ENCODE measurements at regions of chr5 and their contacts with region 1.

Region 1: DNA sequence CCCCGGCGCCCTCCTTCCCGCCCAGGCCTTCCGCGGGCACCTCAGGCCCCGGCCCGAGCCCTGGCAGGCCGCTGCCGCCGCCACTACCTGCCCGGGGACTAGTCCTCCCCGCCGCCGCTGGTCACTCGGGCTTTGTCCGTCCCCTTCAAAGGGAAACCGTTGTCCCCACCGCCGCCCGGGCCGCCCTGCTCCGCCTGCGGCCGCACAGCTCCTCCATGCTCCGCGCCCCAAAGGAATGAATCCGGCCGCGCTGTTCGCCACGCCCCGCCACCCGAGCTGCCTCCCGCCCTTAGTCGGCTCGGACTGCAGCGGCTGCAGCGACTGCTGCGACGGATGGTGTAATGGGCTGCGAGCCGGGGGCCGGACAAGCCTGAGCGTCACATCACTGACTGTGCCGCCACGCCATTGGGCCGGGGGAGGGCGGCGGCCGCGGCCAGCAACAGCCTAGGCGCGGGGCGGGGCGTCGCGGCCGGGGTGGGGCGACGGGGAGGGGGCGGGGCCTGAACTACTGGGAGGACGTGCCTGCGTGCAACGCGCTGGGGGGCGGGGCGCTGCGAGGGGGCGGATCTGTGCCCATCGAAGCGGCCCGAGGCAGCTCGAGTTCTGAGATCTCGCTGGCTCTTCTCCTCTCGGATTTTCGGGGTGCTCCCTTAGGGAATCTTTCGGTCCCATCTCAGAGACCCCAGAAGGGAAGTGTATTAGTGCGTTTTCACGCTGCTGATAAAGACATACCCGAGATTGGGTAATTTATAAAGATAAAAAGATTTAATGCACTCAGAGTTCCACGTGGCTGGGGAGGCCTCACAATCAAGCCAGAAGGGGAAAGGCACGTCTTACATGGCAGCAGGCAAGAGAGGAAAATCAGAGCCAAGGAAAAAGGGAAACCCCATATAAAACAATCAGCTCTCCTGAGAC is at the start of gene FEM1C:
- DNase-seq: peak; percentile 93 to 100 (median 96)
- ATAC-seq: peak; percentile 86
- H3K4me3 ChIP-seq: peak within 1 kb of the TSS; percentile 76
- H3K4me3 Mint-ChIP-seq: peak within 1 kb of the TSS; percentile 98
- H3K27ac ChIP-seq: peak within 1 kb of the TSS; percentile 78 to 95
- H3K27ac Mint-ChIP-seq: peak within 1 kb of the TSS; percentile 98
- H3K4me1 ChIP-seq: peaks cover 14% of the 10 kb centered on the region
- H3K4me1 Mint-ChIP-seq: peaks cover 59% of the 10 kb centered on the region
- H3K27me3 ChIP-seq: no peaks in the 10 kb centered on the region
- H3K27me3 Mint-ChIP-seq: no peaks in the 10 kb centered on the region
- CTCF ChIP-seq: no peak
- total RNA-seq, gene FEM1C: 43.3 to 44.2 TPM

Region 2: DNA sequence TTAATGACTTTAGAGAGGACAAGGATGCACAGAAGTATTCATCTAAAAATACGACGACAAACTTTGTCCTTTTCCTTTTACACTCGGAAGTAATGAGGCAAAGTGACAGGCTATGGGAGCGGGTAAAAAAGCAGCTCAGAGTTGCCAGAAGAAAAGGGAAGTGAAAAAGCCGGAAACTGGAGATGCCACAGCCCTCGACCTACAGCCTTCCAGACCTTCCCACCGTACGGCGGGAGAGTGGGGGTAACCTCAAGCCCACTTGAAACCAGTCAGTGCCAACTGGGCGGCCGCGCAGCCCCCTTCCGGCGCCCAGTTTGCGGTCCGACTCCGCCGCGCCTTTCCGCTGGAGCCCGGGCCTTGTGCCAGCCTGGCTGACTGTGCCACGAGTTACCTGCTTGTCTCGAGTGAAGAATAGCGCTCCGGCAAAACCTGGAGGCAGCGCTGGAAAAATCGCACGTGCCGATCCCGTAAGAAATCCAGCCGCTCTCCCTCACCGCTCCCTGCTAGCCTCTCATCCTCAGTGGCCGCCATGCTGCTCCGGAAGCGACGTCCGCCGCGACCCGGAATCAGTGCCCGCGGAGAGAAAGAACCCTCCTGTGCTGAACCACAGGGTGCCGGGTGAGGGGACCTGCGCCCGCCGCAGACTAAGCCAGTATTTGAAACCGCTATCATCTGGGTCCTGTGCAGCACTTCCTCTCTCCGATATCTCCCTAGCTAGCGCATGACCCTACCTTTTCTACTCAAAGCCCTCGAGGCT is 282.2 kb before region 1 on chr5 and contains the start of gene PGGT1B:
- CTCF ChIA-PET with region 1: no interaction called
- POLR2A ChIA-PET with region 1: interaction called, 10 read pairs
- intact Hi-C with region 1: no loop called
- DNase-seq: peak; percentile 48 to 82 (median 64)
- ATAC-seq: peak; percentile 93
- H3K4me3 ChIP-seq: peak within 1 kb of the TSS; percentile 76
- H3K4me3 Mint-ChIP-seq: peak within 1 kb of the TSS; percentile 96
- H3K27ac ChIP-seq: peak within 1 kb of the TSS; percentile 52 to 72
- H3K27ac Mint-ChIP-seq: peak within 1 kb of the TSS; percentile 77
- H3K4me1 ChIP-seq: peaks cover 14% of the 10 kb centered on the region
- H3K4me1 Mint-ChIP-seq: peaks cover 53% of the 10 kb centered on the region
- H3K27me3 ChIP-seq: no peaks in the 10 kb centered on the region
- H3K27me3 Mint-ChIP-seq: no peaks in the 10 kb centered on the region
- CTCF ChIP-seq: no peak
- total RNA-seq, gene PGGT1B: 37.5 to 39.3 TPM

Region 3: DNA sequence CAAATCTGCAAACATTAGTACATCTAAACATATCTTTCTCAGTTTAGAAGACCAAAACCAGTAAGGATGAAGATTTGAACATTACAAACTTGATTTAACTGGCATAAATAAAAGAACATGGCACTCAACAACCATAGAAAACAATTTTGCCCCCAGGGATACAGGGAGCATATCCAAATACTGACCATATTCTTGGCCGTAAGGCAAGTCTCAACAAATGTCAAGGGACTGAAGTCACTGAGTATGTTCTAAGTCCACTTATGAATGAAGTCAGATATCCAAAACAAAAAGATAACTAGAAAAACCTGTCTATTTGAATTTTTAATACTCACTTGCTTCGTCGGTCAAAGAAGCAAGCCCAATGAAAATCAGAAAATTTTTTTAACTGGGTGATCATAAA is 14.3 kb before region 1 on chr5:
- CTCF ChIA-PET with region 1: interaction called, 3 read pairs
- POLR2A ChIA-PET with region 1: interaction called, 16 read pairs
- intact Hi-C with region 1: no loop called
- DNase-seq: no peak
- ATAC-seq: no peak
- H3K4me3 ChIP-seq: no peak overlapping the region
- H3K4me3 Mint-ChIP-seq: no peak overlapping the region
- H3K27ac ChIP-seq: no peak overlapping the region
- H3K27ac Mint-ChIP-seq: no peak overlapping the region
- H3K4me1 ChIP-seq: no peaks in the 10 kb centered on the region
- H3K4me1 Mint-ChIP-seq: peaks cover 83% of the 10 kb centered on the region
- H3K27me3 ChIP-seq: no peaks in the 10 kb centered on the region
- H3K27me3 Mint-ChIP-seq: no peaks in the 10 kb centered on the region
- CTCF ChIP-seq: no peak

Region 4: GRCh38 chr5:115601701-115602590 is 57.3 kb after region 1 on chr5 and contains the start of gene TICAM2:
- CTCF ChIA-PET with region 1: no interaction called
- POLR2A ChIA-PET with region 1: interaction called, 21 read pairs
- intact Hi-C with region 1: no loop called
- DNase-seq: peak in 13 of 14 experiments; percentile 34 to 82 (median 42)
- ATAC-seq: peak; percentile 86
- H3K4me3 ChIP-seq: peak within 1 kb of the TSS; percentile 61
- H3K4me3 Mint-ChIP-seq: peak within 1 kb of the TSS; percentile 84
- H3K27ac ChIP-seq: peak within 1 kb of the TSS in 1 of 2 donors; percentile 22
- H3K27ac Mint-ChIP-seq: peak within 1 kb of the TSS; percentile 71
- H3K4me1 ChIP-seq: peaks cover 14% of the 10 kb centered on the region
- H3K4me1 Mint-ChIP-seq: peaks cover 33% of the 10 kb centered on the region
- H3K27me3 ChIP-seq: no peaks in the 10 kb centered on the region
- H3K27me3 Mint-ChIP-seq: no peaks in the 10 kb centered on the region
- CTCF ChIP-seq: no peak
- total RNA-seq, gene TICAM2: 0.30 to 0.50 TPM

Region 5: DNA sequence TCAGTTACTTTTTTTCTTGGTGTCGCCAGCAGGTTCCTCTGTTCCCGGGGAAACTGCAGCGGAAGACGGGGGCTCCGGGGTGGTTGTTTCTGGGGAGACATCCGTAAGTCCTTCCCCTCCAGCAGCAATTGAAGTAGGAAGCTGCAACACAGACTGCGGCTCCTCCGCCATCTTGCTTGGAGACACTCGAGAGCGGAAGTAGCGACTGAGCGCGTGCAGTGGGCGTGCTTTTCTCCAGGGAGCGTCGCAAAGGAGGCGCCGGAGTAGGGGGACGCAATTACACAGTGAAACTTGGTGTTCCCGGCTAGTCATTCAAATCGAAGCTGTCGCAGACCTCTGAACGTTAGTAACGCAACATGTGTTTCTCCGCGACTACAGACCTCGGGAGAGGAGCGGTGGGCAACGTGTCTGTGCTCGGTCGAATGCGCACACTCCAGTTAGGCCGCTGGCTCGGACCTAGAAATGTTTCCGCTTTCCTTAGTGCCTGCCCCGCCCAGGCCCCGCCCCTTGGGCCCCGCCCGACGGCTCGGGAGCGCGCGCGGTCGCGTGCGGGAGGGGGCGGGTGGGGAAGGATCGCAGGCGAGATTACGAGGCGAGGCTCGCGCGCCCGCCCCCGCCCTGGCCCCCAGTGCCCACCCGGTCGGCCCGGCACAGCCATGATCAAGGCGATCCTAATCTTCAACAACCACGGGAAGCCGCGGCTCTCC is 296.8 kb after region 1 on chr5 and contains the starts of genes AP3S1 and ATG12:
- CTCF ChIA-PET with region 1: no interaction called
- POLR2A ChIA-PET with region 1: interaction called, 16 read pairs
- intact Hi-C with region 1: loop called (anchors 2 to 10 kb)
- DNase-seq: peak; percentile 79 to 96 (median 89)
- ATAC-seq: peak; percentile 89
- H3K4me3 ChIP-seq: peak within 1 kb of the TSS; percentile 71
- H3K4me3 Mint-ChIP-seq: peak within 1 kb of the TSS; percentile 99
- H3K27ac ChIP-seq: peak within 1 kb of the TSS; percentile 85 to 97
- H3K27ac Mint-ChIP-seq: peak within 1 kb of the TSS; percentile 97
- H3K4me1 ChIP-seq: peaks cover 25% of the 10 kb centered on the region
- H3K4me1 Mint-ChIP-seq: peaks cover 76% of the 10 kb centered on the region
- H3K27me3 ChIP-seq: no peaks in the 10 kb centered on the region
- H3K27me3 Mint-ChIP-seq: no peaks in the 10 kb centered on the region
- CTCF ChIP-seq: no peak
- total RNA-seq, gene AP3S1: 33.2 to 33.6 TPM
- total RNA-seq, gene ATG12: 61.0 to 62.2 TPM

Measured in CD4-positive, alpha-beta T cell (primary cell).